CD14-positive monocyte (primary cell): ENCODE measurements at regions of chr1 and their contacts with region 1.

Region 1: GRCh38 chr1:150072959-150073358 is 5.4 kb downstream of the VPS45 start:
- DNase-seq: peak in 2 of 3 donors; percentile 13 to 47
- H3K4me3 ChIP-seq: no peak overlapping the region
- H3K4me3 Mint-ChIP-seq: no peak overlapping the region
- H3K27ac ChIP-seq: no peak overlapping the region
- H3K27ac Mint-ChIP-seq: peak overlapping the region in 2 of 7 donors; percentile 15 to 55
- H3K4me1 ChIP-seq: peaks cover 10 to 13% of the 10 kb centered on the region in 2 donors
- H3K4me1 Mint-ChIP-seq: peaks cover 21% of the 10 kb centered on the region
- H3K27me3 ChIP-seq: no peaks in the 10 kb centered on the region
- H3K27me3 Mint-ChIP-seq: no peaks in the 10 kb centered on the region
- CTCF ChIP-seq: peak; percentile 74

Region 2: GRCh38 chr1:150106341-150106740 is 33.4 kb after region 1 on chr1:
- intact Hi-C with region 1: no loop called
- DNase-seq: no peak
- H3K4me3 ChIP-seq: no peak overlapping the region
- H3K4me3 Mint-ChIP-seq: no peak overlapping the region
- H3K27ac ChIP-seq: no peak overlapping the region
- H3K27ac Mint-ChIP-seq: no peak overlapping the region
- H3K4me1 ChIP-seq: peaks cover 0 to 10% of the 10 kb centered on the region in 2 donors
- H3K4me1 Mint-ChIP-seq: peaks cover 17% of the 10 kb centered on the region
- H3K27me3 ChIP-seq: no peaks in the 10 kb centered on the region
- H3K27me3 Mint-ChIP-seq: peaks cover 0 to 3% (median 0%) of the 10 kb centered on the region in 3 donors
- CTCF ChIP-seq: no peak

Region 3: DNA sequence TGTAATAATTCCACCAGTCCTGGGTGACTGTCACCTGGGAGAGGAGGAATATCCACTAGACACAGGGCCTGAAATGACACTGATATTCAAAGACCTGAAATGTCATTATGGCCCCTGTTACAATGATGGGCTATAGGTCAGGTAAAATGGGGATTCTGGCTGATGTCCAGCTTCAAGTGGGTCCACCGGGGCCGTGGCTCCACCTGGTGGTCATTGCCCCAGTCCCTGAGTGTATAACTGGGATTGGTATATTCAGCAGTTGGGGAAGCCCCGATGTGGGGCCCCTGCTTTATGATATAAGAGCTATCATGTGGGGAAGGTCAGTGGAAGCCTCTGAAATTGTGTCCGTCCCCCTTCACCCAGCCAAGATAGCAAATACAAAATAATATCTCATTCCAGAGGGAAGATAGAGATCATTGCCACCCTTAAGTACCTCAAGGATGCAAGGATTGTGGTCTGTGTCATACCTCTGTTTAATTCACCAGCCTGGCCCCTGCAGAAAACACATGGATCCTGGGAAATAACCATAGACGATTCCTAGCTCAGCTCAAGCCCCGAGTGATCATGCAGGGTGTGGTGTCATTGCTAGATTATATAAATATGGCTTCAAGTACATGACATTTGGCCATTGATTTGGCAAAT is 96.1 kb after region 1 on chr1:
- intact Hi-C with region 1: loop called (anchors 1 to 5 kb)
- DNase-seq: peak; percentile 54 to 77 (median 77)
- H3K4me3 ChIP-seq: no peak overlapping the region
- H3K4me3 Mint-ChIP-seq: no peak overlapping the region
- H3K27ac ChIP-seq: no peak overlapping the region
- H3K27ac Mint-ChIP-seq: peak overlapping the region in 1 of 7 donors; percentile 72
- H3K4me1 ChIP-seq: peaks cover 37 to 52% of the 10 kb centered on the region in 2 donors
- H3K4me1 Mint-ChIP-seq: peaks cover 60% of the 10 kb centered on the region
- H3K27me3 ChIP-seq: no peaks in the 10 kb centered on the region
- H3K27me3 Mint-ChIP-seq: peaks cover 0 to 4% (median 0%) of the 10 kb centered on the region in 3 donors
- CTCF ChIP-seq: peak; percentile 87